ENCODE measurements at regions of chr22 and their contacts with region 1.

Region 1: GRCh38 chr22:49305214-49305909 is 522.3 kb downstream of the BRD1 start:
- DNase-seq: peak; percentile 37
- H3K4me3 Mint-ChIP-seq: no peak overlapping the region
- H3K27ac Mint-ChIP-seq: no peak overlapping the region
- H3K4me1 Mint-ChIP-seq: no peaks in the 10 kb centered on the region
- H3K27me3 Mint-ChIP-seq: peaks cover 10% of the 10 kb centered on the region

Region 2: DNA sequence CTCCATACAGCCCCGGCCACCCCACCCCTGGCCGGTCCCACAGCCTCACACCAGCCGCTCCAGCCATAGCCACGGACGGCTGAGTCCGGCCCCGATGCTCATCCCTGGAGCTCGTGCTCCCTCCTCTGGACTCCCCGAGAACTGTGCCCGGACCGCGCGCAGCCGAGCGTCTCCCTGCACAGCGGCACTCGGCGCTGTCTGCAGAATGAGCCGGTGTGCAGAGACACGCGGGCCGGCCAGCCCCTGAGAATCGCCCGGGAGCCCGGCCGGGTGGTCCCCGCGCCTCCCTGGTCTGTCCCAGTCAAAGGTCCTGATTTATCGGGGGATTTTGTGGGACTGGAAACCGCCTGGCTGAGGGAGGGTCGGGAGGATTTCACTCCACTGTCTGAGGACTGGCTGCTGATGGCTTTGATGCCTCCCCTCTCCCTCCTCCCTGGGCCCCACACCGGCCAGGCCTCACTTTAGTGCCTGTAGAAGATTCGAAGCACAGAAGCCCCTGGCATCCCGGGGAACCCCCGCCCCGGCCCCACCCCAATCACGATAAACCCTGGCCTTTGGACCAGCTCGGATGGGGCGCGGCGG is 419.6 kb after region 1 on chr22:
- intact Hi-C with region 1: loop called (anchors 1 kb)
- DNase-seq: peak; percentile 61
- H3K4me3 Mint-ChIP-seq: peak overlapping the region; percentile 56
- H3K27ac Mint-ChIP-seq: no peak overlapping the region
- H3K4me1 Mint-ChIP-seq: peaks cover 5% of the 10 kb centered on the region
- H3K27me3 Mint-ChIP-seq: peaks cover 13% of the 10 kb centered on the region

Measured in activated T-helper 1 cell treated with anti-CD3 and anti-CD28 coated beads, Interleukin-12 subunit alpha, Interleukin-12 subunit beta, Interleukin-2, Interleukin-4 antibody, amounts not matched to agents 30 ng/mL and 10 ng/mL and 1 ng/mL, durations not matched to agents 14 hours and 24 hours and 36 hours (primary cell).